Right cardiac atrium (tissue), 5 donors: ENCODE measurements at regions of chr3 and their contacts with region 1.

Region 1: DNA sequence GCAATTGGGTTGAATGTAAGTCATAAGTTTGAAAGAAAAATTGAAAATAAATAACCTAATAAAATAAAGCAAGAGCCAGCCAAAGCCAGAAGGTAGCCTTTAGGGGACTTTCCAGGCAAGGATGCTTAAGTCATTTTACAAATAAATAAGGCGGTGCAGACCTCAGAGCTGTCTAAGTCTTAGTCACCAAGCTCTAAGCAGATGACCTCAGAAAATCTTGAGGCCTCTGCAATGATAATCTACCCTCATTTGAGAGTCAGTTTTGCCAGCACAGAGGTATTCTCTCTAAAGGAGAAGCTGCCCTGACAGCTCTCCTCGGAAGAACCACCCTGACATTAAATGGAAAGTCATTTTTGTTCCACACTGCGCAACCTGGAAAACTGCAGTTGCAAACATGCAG is 113.9 kb downstream of the OXNAD1 start:
- DNase-seq: no peak
- ATAC-seq: no peak
- H3K4me3 ChIP-seq: no peak overlapping the region
- H3K27ac ChIP-seq: no peak overlapping the region
- H3K4me1 ChIP-seq: peaks cover 7% of the 10 kb centered on the region
- H3K27me3 ChIP-seq: no peaks in the 10 kb centered on the region

Region 2: GRCh38 chr3:16311960-16312451 is 66.9 kb before region 1 on chr3:
- intact Hi-C with region 1: loop called in 1 of 4 experiments (anchors 10 kb)
- DNase-seq: peak; percentile 62 to 70 (median 64)
- ATAC-seq: peak; percentile 61 to 94
- H3K4me3 ChIP-seq: no peak overlapping the region
- H3K27ac ChIP-seq: no peak overlapping the region
- H3K4me1 ChIP-seq: peaks cover 4% of the 10 kb centered on the region
- H3K27me3 ChIP-seq: no peaks in the 10 kb centered on the region

Region 3: GRCh38 chr3:16511681-16512434 is 132.9 kb after region 1 on chr3:
- intact Hi-C with region 1: loop called in 1 of 4 experiments (anchors 10 kb)
- DNase-seq: peak; percentile 72 to 87 (median 75)
- ATAC-seq: peak; percentile 54 to 74
- H3K4me3 ChIP-seq: peak overlapping the region; percentile 64
- H3K27ac ChIP-seq: peak overlapping the region; percentile 81
- H3K4me1 ChIP-seq: peaks cover 15% of the 10 kb centered on the region
- H3K27me3 ChIP-seq: no peaks in the 10 kb centered on the region

Region 4: DNA sequence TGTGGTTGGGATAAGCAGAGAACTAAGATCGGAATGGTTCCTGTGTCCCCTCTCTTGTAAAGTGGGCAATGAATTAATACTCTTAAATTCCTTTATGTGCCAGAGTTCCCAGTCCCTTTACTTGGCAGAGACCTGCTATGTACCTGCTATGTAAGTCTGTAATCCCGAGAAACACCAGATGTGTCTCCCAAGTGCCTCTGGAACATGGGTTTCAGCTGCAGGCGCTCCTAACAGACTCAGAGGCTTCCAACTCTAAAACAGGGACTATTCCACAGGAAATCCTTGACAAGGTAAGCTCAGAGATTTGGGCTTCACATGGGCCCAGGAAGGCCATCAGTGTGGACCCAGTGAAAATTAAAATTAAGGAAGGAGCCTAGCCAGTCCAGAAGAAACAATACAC is 388.1 kb after region 1 on chr3:
- intact Hi-C with region 1: no loop called
- DNase-seq: no peak
- ATAC-seq: peak in 1 of 2 donors; percentile 63
- H3K4me3 ChIP-seq: no peak overlapping the region
- H3K27ac ChIP-seq: no peak overlapping the region
- H3K4me1 ChIP-seq: peaks cover 11% of the 10 kb centered on the region
- H3K27me3 ChIP-seq: no peaks in the 10 kb centered on the region